MCF 10A (cell line): ENCODE measurements at regions of chr2 and their contacts with region 1.

Region 1: GRCh38 chr2:85728883-85729824 is 24.6 kb upstream of the ATOH8 start:
- DNase-seq: peak; percentile 85
- H3K4me3 Mint-ChIP-seq: no peak overlapping the region
- H3K27ac Mint-ChIP-seq: no peak overlapping the region
- H3K4me1 Mint-ChIP-seq: peaks cover 6% of the 10 kb centered on the region
- H3K27me3 Mint-ChIP-seq: no peaks in the 10 kb centered on the region
- CTCF ChIP-seq: peak; percentile 91

Region 2: DNA sequence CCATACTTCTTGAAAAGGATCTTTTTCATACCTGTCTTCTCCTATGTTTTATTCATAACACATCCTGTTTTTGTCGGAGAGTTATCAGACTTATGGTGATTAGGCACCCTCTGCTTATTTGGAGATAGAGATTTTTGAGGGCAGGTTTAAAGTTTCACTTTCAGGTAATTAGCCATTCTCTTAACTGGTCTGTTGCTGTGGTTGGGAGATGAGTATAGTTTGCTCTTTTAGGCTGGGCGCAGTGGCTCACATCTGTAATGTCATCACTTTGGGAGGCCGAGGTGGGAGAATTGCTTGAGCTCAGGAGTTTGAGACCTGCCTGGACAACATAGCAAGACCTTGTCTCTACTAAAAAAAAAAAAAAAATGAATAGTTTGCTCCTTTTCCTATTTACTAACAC is 86.4 kb before region 1 on chr2:
- CTCF ChIA-PET with region 1: interaction called, 16 read pairs
- POLR2A ChIA-PET with region 1: interaction called, 4 read pairs
- intact Hi-C with region 1: loop called (anchors 1 kb)
- DNase-seq: no peak
- H3K4me3 Mint-ChIP-seq: no peak overlapping the region
- H3K27ac Mint-ChIP-seq: no peak overlapping the region
- H3K4me1 Mint-ChIP-seq: no peaks in the 10 kb centered on the region
- H3K27me3 Mint-ChIP-seq: no peaks in the 10 kb centered on the region
- CTCF ChIP-seq: no peak

Region 3: DNA sequence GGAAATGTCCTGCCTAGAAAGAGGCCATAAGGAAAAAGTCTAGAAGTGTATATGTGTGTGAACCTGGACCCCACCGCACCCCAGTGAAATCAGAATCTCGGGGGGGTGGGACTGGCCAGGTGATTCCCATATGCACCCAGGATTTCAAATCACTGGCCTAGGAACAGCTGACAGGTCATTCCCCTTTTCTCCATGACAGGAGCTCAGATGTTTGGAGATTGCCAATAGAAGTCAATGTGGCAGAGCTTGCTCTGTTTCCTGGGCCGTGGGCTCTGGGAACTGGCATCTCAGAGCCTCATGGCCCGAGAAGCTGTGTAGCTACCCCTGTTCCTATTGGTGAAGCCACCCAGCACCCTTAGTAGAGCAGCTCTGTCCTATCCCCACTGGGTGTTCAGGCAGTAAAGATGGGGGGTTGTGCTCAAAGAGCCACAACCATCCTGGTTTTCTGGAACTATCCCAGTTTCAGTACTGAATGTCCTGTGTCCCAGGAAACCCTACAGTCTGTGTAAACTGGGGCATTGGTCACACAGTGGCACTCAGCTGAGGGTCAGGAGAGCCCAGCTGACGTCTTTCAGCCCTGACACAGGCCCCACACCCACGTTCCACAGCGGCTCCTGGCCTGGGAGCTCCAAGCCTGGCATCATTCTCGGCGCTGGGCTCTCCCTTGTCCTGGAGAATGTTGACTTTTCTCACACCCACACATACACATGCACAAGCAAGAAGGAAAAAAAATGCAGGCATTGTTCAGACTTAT is 16.1 kb before region 1 on chr2:
- CTCF ChIA-PET with region 1: interaction called, 43 read pairs
- POLR2A ChIA-PET with region 1: interaction called, 4 read pairs
- intact Hi-C with region 1: no loop called
- DNase-seq: peak; percentile 90
- H3K4me3 Mint-ChIP-seq: no peak overlapping the region
- H3K27ac Mint-ChIP-seq: peak overlapping the region; percentile 87
- H3K4me1 Mint-ChIP-seq: peaks cover 28% of the 10 kb centered on the region
- H3K27me3 Mint-ChIP-seq: no peaks in the 10 kb centered on the region
- CTCF ChIP-seq: no peak

Region 4: DNA sequence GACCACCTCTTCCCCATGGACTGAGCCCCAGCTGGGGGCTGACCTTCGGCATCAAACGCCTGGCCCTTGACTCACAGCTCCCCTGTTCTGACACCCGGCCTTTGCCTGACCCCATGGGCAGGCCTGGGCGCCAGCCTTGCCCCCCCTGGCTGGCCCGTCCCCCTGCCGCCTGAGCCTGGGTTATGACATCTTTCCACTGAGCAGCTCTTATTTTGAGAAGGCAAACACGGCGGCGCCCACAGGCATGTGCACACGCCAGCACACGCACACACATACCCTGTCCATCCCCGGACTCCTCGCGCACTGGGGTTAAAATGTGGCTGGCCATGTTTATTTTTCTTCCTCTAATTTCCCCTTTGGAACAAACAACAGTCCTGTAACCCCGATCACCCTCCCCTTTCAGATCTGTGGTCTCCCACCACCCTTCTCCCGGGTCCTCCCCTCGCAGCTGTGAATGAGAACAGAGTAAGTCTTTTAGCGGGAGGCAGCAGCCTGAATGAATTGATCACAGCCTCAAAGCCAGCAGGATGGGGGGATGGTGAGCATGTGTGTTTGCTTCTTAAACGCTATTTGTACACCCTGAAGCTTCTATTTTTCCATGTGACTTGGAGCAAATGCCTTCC is 12.8 kb after region 1 on chr2:
- CTCF ChIA-PET with region 1: interaction called, 26 read pairs
- POLR2A ChIA-PET with region 1: interaction called, 7 read pairs
- intact Hi-C with region 1: no loop called
- DNase-seq: peak; percentile 58
- H3K4me3 Mint-ChIP-seq: peak overlapping the region; percentile 11
- H3K27ac Mint-ChIP-seq: peak overlapping the region; percentile 91
- H3K4me1 Mint-ChIP-seq: peaks cover 29% of the 10 kb centered on the region
- H3K27me3 Mint-ChIP-seq: peaks cover 19% of the 10 kb centered on the region
- CTCF ChIP-seq: no peak

Region 5: GRCh38 chr2:85750587-85751575 is 21.7 kb after region 1 on chr2:
- CTCF ChIA-PET with region 1: interaction called, 25 read pairs
- POLR2A ChIA-PET with region 1: interaction called, 3 read pairs
- intact Hi-C with region 1: loop called (anchors 1 kb)
- DNase-seq: peak; percentile 73
- H3K4me3 Mint-ChIP-seq: no peak overlapping the region
- H3K27ac Mint-ChIP-seq: no peak overlapping the region
- H3K4me1 Mint-ChIP-seq: peaks cover 9% of the 10 kb centered on the region
- H3K27me3 Mint-ChIP-seq: peaks cover 66% of the 10 kb centered on the region
- CTCF ChIP-seq: peak; percentile 83

Region 6: DNA sequence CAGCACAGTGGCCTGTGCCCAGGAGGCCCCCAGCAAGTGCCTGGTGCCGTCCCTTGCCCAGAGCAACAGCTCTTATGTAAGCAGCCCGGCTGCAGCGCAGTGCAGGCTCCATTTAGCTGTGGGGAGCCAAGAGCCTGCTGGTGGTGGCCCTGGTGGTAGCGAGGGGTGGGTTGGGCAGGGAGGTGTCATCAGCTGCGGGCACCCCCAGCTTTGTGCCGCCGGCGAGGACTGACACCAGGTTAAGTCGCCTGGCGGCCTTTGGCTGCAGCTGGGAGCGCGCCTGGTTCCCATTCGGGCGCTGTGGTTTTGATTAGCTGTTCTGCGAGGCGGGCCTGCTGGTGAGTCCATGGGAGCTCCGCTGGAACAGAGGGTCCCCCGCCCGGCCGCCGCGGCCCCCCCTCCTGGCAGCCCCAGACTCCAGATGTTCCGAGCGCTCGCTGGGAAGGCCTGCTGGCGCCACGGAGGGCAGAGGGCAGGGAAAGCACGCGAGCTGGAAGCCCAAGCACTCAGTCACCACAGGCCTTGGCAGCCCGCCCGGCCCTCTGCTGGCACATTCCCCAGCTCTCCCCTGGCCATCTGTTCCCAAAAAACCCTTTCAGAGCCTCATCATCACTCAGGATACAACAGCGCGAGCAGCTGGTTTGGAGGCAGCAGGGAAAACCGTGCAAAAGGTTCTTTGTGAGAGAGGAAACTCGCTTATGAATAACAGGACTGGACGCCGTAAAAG is 43.0 kb after region 1 on chr2:
- CTCF ChIA-PET with region 1: interaction called, 20 read pairs
- POLR2A ChIA-PET with region 1: interaction called, 4 read pairs
- intact Hi-C with region 1: no loop called
- DNase-seq: peak; percentile 98
- H3K4me3 Mint-ChIP-seq: peak overlapping the region; percentile 17
- H3K27ac Mint-ChIP-seq: peak overlapping the region; percentile 77
- H3K4me1 Mint-ChIP-seq: peaks cover 34% of the 10 kb centered on the region
- H3K27me3 Mint-ChIP-seq: no peaks in the 10 kb centered on the region
- CTCF ChIP-seq: peak; percentile 5

Region 7: GRCh38 chr2:85804583-85804982 is 75.4 kb after region 1 on chr2:
- CTCF ChIA-PET with region 1: interaction called, 33 read pairs
- POLR2A ChIA-PET with region 1: no interaction called
- intact Hi-C with region 1: no loop called
- DNase-seq: peak; percentile 51
- H3K4me3 Mint-ChIP-seq: no peak overlapping the region
- H3K27ac Mint-ChIP-seq: no peak overlapping the region
- H3K4me1 Mint-ChIP-seq: peaks cover 7% of the 10 kb centered on the region
- H3K27me3 Mint-ChIP-seq: no peaks in the 10 kb centered on the region
- CTCF ChIP-seq: peak; percentile 60